ENCODE measurements at regions of chr7 and their contacts with region 1.

Region 1: DNA sequence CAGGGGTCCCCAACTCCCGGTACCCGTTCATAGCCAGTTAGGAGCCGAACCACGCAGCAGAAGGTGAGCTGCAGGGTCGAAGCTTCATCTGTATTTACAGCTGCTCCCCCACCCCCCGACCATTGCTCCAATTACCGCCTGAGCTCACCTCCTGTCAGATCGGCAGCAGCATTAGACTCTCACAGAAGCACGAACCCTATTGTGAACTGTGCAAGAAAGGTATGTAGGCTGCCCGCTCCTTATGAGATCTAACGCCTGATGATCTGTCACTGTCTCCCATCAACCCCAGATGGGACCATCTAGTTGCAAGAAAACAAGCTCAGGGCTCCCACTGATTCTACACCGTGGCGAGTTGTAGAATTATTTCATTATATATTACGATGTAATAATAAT is 14.6 kb upstream of the AZGP1 start:
- DNase-seq: peak in 1 of 6 donors; percentile 12
- ATAC-seq: no peak
- H3K4me3 ChIP-seq: no peak overlapping the region
- H3K27ac ChIP-seq: no peak overlapping the region
- H3K4me1 ChIP-seq: peaks cover 0 to 5% (median 0%) of the 10 kb centered on the region in 3 donors
- H3K27me3 ChIP-seq: no peaks in the 10 kb centered on the region
- CTCF ChIP-seq: no peak

Region 2: DNA sequence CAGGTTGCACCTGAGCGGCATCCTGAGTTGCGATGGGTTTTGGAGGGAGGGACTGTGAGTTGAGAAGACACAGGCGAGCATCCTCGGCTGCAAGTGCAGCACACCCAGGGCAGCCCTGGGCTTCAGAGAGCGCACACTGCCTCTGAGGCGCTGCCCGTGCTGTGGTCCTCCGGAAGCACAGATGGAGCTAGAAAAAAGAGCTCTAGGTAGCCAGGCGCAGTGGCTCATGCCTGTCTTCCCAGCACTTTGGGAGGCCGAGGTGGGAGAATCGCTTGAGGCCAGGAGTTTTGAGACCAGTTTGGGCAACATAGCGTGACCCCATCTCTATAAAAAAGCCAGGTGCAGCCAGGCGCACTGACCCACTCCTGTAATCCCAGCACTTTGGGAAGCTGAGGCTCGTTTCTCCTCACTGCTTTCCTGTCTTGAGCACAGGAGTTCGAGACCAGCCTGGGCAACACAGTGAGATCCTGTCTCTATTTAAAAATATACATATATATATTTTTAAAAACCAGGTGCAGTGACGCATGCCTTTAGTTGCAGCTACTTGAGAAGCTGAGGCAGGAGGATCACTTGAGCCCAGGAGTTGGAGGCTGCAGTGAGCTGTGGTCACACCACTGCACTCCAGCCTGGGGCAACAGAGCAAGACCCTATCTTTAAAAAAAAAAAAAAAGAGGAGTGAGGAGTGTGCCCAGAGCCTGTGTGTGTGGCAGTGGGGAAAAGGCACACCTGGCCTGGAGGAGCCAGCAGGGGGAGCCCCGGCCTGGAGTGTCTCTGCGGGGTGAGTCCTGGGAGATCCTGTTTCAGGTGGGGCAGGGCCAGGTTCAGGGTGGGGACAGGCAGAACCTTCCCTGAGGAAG is 625.3 kb before region 1 on chr7:
- intact Hi-C with region 1: no loop called
- DNase-seq: peak in 4 of 6 donors; percentile 53 to 81 (median 68)
- ATAC-seq: peak; percentile 62 to 90 (median 84)
- H3K4me3 ChIP-seq: no peak overlapping the region
- H3K27ac ChIP-seq: no peak overlapping the region
- H3K4me1 ChIP-seq: no peaks in the 10 kb centered on the region
- H3K27me3 ChIP-seq: no peaks in the 10 kb centered on the region
- CTCF ChIP-seq: peak; percentile 8 to 41 (median 25)

Region 3: DNA sequence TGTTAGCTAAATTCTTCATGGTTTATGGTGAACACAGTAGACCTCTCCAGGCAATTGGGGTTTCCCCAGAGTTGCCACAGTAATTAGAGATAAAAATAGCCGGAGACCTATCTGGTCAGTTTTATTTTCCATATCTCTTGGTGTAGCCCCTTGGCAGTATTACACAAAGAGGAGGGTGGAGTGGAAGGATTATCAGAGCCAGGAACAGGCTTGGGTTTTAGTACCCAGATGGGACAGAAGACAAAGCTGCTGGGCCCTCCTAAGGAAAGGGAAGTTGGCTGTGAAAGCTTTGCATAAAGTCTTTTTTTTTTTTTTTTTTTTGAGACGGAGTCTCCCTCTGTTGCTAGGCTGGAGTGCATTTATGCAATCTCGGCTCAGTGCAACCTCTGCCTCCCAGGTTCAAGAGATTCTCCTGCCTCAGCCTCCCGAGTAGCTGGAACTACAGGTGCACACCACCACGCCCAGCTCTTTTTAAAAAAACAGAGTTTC is 68.8 kb after region 1 on chr7:
- intact Hi-C with region 1: loop called in 1 of 3 experiments (anchors 5 kb)
- DNase-seq: no peak
- ATAC-seq: no peak
- H3K4me3 ChIP-seq: no peak overlapping the region
- H3K27ac ChIP-seq: no peak overlapping the region
- H3K4me1 ChIP-seq: no peaks in the 10 kb centered on the region
- H3K27me3 ChIP-seq: no peaks in the 10 kb centered on the region
- CTCF ChIP-seq: no peak

Region 4: GRCh38 chr7:100177045-100178001 is 186.9 kb after region 1 on chr7 and contains the starts of genes GPC2 and STAG3:
- intact Hi-C with region 1: no loop called
- DNase-seq: peak; percentile 91 to 97 (median 95)
- ATAC-seq: peak; percentile 95 to 99 (median 96)
- H3K4me3 ChIP-seq: peak within 1 kb of the TSS in 2 of 4 donors; percentile 19 to 59
- H3K27ac ChIP-seq: no peak within 1 kb of the TSS
- H3K4me1 ChIP-seq: no peaks in the 10 kb centered on the region
- H3K27me3 ChIP-seq: no peaks in the 10 kb centered on the region
- CTCF ChIP-seq: no peak
- total RNA-seq, gene GPC2: 0.12 to 2.5 (median 0.51) TPM
- total RNA-seq, gene STAG3: 0.19 to 1.2 (median 0.94) TPM